CD4-positive, alpha-beta T cell (primary cell): ENCODE measurements at regions of chr12 and their contacts with region 1.

Region 1: DNA sequence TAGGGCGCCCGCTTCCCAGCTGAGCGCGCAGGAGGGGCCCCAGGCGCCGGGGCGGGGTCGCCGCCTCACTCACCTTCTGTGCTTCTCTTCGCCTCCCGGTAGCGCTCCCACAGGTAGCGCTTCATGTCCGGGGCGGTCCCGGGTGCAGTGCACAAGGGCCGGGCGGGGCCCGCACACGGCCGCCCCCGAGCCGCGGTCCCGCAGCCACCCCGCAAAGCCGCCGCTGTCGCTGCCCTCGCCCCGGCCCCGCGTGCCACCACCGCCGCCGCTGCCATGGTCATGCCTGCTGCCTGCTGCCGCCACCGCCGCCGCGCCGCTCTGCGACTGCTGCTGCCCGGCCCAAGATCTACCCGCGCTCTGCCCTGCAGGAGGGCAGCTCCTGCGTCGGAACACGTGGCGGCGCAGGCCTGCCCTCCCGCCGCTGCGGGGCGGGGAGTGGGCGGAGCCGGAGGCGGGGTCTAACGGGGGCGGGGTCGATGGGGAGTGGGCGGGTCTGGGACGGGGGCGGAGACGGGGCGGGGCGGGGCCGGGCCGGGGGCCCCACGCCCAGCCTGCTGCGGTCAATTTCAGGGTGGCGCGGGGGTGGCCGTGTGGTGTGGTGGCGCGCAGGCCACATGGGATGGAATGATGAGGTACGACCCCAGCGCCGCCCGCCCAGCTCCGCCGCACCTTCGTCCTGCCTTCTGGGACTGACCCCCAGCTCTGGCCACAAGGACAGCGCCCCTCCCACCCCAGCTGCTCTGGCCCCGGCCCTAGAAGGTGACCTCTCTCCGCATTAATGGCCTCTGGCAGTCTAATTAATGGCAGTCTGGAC is at the start of gene NT5DC3:
- DNase-seq: peak; percentile 72 to 92 (median 82)
- ATAC-seq: peak; percentile 87
- H3K4me3 ChIP-seq: peak within 1 kb of the TSS; percentile 78
- H3K4me3 Mint-ChIP-seq: peak within 1 kb of the TSS; percentile 94
- H3K27ac ChIP-seq: peak within 1 kb of the TSS in 1 of 2 donors; percentile 60
- H3K27ac Mint-ChIP-seq: peak within 1 kb of the TSS; percentile 78
- H3K4me1 ChIP-seq: peaks cover 19% of the 10 kb centered on the region
- H3K4me1 Mint-ChIP-seq: peaks cover 21% of the 10 kb centered on the region
- H3K27me3 ChIP-seq: no peaks in the 10 kb centered on the region
- H3K27me3 Mint-ChIP-seq: no peaks in the 10 kb centered on the region
- CTCF ChIP-seq: no peak
- total RNA-seq, gene NT5DC3: 3.5 to 4.0 TPM

Region 2: GRCh38 chr12:103956516-103957027 is 115.5 kb after region 1 on chr12:
- CTCF ChIA-PET with region 1: no interaction called
- POLR2A ChIA-PET with region 1: interaction called, 6 read pairs
- intact Hi-C with region 1: loop called in 1 of 2 experiments (anchors 2 kb)
- DNase-seq: peak in 2 of 14 experiments; percentile 10 to 34
- ATAC-seq: no peak
- H3K4me3 ChIP-seq: peak overlapping the region; percentile 95
- H3K4me3 Mint-ChIP-seq: peak overlapping the region; percentile 99
- H3K27ac ChIP-seq: peak overlapping the region; percentile 64 to 74
- H3K27ac Mint-ChIP-seq: peak overlapping the region; percentile 97
- H3K4me1 ChIP-seq: peaks cover 25% of the 10 kb centered on the region
- H3K4me1 Mint-ChIP-seq: peaks cover 42% of the 10 kb centered on the region
- H3K27me3 ChIP-seq: no peaks in the 10 kb centered on the region
- H3K27me3 Mint-ChIP-seq: no peaks in the 10 kb centered on the region
- CTCF ChIP-seq: no peak

Region 3: DNA sequence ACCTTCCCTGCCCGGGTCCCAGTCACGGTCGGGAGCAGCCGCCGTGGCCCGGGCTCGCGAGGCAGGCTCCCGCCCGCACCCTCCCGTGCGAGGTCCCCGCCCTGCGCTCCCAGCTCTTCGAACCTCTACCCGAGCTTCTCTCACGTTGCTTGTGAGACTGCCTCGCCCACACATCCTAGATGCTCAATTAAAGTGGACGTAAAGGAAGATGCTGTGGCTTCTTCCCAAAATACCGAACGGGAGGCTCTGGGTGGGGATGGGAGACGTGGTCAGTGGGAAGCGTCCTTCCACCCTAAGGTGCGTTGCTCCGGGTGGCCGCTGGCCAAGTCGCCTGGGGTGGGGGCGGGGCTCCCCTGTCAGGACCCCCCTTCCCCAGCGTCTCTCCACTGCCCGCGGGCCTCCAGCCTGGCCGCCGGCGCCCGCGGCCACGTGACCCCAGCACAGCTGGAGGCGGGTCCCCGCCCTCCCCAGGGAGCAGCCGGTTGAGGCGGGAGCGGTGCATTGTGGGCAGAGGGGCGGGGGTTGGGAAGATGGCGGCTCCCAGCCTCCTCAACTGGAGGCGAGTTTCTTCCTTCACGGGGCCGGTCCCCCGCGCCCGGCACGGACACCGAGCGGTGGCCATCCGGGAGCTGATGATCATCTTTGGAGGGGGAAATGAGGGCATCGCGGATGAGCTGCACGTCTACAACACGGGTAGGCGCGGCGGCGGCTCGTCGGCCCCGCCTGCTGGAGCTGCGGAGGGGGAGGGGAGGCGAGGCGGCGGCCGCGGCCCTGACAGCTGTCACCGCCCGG is 223.1 kb after region 1 on chr12 and contains the start of gene HCFC2:
- CTCF ChIA-PET with region 1: no interaction called
- POLR2A ChIA-PET with region 1: interaction called, 4 read pairs
- intact Hi-C with region 1: loop called in 1 of 2 experiments (anchors 5 kb)
- DNase-seq: peak; percentile 74 to 93 (median 85)
- ATAC-seq: peak; percentile 92
- H3K4me3 ChIP-seq: peak within 1 kb of the TSS; percentile 85
- H3K4me3 Mint-ChIP-seq: peak within 1 kb of the TSS; percentile 95
- H3K27ac ChIP-seq: peak within 1 kb of the TSS; percentile 42 to 59
- H3K27ac Mint-ChIP-seq: peak within 1 kb of the TSS; percentile 82
- H3K4me1 ChIP-seq: peaks cover 17% of the 10 kb centered on the region
- H3K4me1 Mint-ChIP-seq: peaks cover 33% of the 10 kb centered on the region
- H3K27me3 ChIP-seq: peaks cover 0 to 2% of the 10 kb centered on the region in 2 experiments
- H3K27me3 Mint-ChIP-seq: peaks cover 10% of the 10 kb centered on the region
- CTCF ChIP-seq: no peak
- total RNA-seq, gene HCFC2: 11.2 to 15.1 TPM

Region 4: DNA sequence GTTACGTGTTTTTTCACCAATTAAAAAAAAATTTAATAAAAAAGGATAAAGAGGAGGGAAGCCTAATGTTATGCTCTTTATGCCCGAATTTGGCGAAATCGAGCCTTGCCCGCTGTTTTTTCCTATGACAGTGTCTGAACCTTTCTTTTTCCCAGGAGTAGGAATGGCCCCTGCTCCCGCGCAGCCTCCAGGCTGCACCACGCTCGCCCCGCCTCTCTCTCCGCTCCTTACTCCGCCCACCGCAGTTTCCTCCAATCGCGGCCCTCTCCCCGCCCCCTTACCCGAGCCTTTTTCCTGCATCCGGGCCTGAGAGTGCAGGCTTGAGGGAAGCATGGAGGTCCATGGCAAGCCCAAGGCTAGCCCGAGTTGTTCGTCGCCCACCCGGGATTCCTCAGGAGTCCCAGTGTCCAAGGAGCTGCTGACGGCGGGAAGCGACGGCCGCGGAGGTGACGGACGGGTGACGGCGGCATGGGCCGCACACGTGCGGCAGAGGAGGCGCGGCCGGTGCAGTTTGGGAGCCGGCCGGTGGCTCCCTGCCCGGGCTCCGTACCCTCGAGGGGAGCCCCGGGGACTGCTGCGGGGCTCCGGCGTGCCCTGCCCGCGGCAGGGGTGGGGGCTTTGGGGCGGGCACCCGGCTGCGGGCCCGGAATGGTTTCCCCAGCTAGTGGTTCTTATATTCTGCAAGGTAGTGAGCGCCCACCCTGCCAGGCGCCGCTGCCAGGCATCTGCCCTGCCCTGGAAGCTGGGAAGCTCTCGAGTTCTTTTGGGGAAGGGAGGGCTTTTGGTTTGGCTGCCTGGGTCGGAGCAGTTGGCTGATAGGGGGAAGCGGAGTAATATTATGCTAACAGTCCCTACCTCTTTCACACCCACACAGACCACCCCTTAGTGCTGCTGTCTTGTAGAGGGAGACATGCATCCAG is 1145.2 kb after region 1 on chr12 and contains the start of gene NOPCHAP1:
- CTCF ChIA-PET with region 1: no interaction called
- POLR2A ChIA-PET with region 1: no interaction called
- intact Hi-C with region 1: loop called in 1 of 2 experiments (anchors 5 kb)
- DNase-seq: peak; percentile 62 to 89 (median 80)
- ATAC-seq: peak; percentile 99
- H3K4me3 ChIP-seq: peak within 1 kb of the TSS; percentile 73
- H3K4me3 Mint-ChIP-seq: peak within 1 kb of the TSS; percentile 97
- H3K27ac ChIP-seq: no peak within 1 kb of the TSS
- H3K27ac Mint-ChIP-seq: peak within 1 kb of the TSS; percentile 68
- H3K4me1 ChIP-seq: peaks cover 21% of the 10 kb centered on the region
- H3K4me1 Mint-ChIP-seq: peaks cover 39% of the 10 kb centered on the region
- H3K27me3 ChIP-seq: no peaks in the 10 kb centered on the region
- H3K27me3 Mint-ChIP-seq: peaks cover 4% of the 10 kb centered on the region
- CTCF ChIP-seq: no peak
- total RNA-seq, gene NOPCHAP1: 10.1 to 11.8 TPM

Region 5: DNA sequence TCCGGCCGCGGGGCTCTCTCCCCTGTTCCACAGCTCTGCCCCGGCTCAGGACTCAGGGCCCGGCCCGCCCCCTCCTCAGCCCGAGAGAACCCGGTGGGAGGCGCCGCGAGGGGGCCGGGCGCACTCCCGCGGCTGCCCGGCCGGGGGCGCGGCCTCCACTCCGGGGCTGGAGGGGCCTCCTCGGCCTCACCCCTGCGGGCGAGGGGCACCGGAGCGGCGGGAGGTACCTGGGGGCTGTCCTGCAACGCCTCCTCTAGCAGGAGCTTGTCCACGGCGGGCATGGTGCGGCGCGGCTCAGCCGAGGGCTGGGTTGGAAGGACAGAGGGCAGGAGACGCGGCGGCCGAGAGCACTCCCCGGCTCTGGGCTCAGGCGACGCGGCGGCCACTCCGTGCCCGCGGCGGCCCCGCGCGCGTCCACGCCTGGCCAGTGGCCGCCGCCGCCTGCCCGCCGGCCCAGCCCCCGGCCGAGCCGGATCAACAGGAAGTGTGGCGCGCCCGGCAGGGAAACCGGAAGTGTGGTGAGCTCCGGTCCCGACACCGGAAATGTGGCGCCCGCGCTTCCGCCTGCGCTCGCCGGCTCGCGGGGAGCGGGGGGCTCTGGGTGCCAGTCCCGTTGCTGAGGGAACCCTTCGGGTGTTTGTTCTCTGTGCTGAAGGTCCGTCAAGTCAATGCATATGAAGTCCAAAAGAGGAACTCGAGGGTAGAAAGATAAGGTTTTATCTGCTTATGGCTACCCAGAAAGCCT is 1394.8 kb after region 1 on chr12 and contains the start of gene APPL2:
- CTCF ChIA-PET with region 1: no interaction called
- POLR2A ChIA-PET with region 1: no interaction called
- intact Hi-C with region 1: loop called in 1 of 2 experiments (anchors 10 kb)
- DNase-seq: peak; percentile 55 to 90 (median 80)
- ATAC-seq: peak; percentile 76
- H3K4me3 ChIP-seq: peak within 1 kb of the TSS; percentile 74
- H3K4me3 Mint-ChIP-seq: peak within 1 kb of the TSS; percentile 94
- H3K27ac ChIP-seq: peak within 1 kb of the TSS; percentile 68 to 83
- H3K27ac Mint-ChIP-seq: peak within 1 kb of the TSS; percentile 90
- H3K4me1 ChIP-seq: peaks cover 39% of the 10 kb centered on the region
- H3K4me1 Mint-ChIP-seq: peaks cover 47% of the 10 kb centered on the region
- H3K27me3 ChIP-seq: no peaks in the 10 kb centered on the region
- H3K27me3 Mint-ChIP-seq: no peaks in the 10 kb centered on the region
- CTCF ChIP-seq: peak; percentile 48
- total RNA-seq, gene APPL2: 58.8 to 59.9 TPM